Dorsolateral prefrontal cortex (tissue), 120 donors: ENCODE measurements at regions of chr11 and their contacts with region 1.

Region 1: GRCh38 chr11:123188508-123189165 is 6.4 kb downstream of the CLMP start:
- DNase-seq: peak in 4 of 10 donors; percentile 29 to 55 (median 44)
- H3K4me3 ChIP-seq: peak overlapping the region in 54 of 59 donors; percentile 1 to 61 (median 38)
- H3K27ac ChIP-seq: peak overlapping the region in 46 of 59 donors; percentile 0 to 79 (median 54)
- H3K27me3 ChIP-seq: peaks cover 0 to 25% (median 0%) of the 10 kb centered on the region in 45 donors
- CTCF ChIP-seq: peak in 18 of 56 donors; percentile 9 to 36 (median 25)

Region 2: DNA sequence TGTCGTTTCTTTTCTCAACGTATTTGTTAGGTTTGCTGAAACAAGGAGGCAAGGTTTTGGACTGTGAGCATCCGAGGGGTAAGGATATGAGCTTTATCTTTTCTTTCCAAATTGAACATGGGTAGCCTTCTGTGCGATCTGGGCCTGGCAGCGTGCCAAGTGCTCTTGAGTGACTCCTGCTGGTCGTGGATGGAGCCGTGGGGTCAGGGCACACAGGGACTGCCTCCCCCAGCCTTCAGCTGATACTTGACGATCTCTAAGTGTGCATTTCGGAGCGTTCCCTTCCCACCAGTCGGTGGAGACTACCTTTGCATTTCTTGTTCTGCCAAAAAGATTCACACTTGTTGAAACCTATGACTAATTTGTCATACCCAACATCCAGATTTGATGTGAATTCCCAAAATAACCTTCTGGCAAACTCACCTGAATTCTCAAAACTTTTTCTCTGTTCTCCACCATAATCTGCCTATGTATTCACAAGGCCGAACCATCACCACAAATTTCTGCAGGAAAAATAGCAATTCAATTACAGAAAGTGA is 46.5 kb after region 1 on chr11:
- intact Hi-C with region 1: loop called in 1 of 2 experiments (anchors 5 kb)
- DNase-seq: peak in 4 of 10 donors; percentile 37 to 53 (median 45)
- H3K4me3 ChIP-seq: no peak overlapping the region
- H3K27ac ChIP-seq: no peak overlapping the region
- H3K27me3 ChIP-seq: no peaks in the 10 kb centered on the region
- CTCF ChIP-seq: peak in 51 of 56 donors; percentile 13 to 70 (median 45)